Posterior vena cava (tissue), 2 donors: ENCODE measurements at regions of chr10 and their contacts with region 1.

Region 1: GRCh38 chr10:59880971-59881510 is 25.3 kb downstream of the CCDC6 start:
- DNase-seq: no peak

Region 2: DNA sequence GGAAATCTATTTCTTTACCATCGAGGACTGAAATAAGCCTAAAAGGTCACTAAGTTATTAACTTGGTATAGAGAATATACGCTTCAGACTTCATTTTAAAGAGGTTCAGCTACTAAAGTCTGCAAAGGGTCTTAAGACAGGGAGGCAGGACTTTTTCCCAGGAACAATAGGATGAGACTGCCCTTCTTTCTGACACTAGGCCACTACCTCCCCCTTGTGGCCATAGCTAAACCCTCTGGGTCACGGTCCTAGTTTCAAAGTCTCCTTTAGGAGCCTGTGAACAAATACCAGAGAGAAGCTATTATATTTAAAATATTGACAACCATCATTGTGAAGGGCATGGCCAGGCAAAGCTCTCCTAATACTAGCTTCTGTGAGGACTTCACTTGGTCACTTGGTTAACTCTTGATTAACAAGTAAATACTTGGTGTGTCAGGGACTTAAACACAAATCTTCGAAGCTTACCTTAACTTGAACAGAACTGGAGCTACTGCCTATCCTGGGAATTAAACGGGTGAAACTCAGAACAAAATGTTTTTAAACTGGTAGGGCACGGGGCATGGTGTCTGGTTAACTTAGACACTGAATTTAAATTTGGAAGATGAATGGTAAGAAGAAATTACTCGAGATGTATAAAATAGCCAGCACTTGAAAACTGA is 50.3 kb before region 1 on chr10:
- intact Hi-C with region 1: loop called in 1 of 2 experiments (anchors 5 kb)
- DNase-seq: no peak